ENCODE measurements at regions of chr2 and their contacts with region 1.

Region 1: GRCh38 chr2:206004004-206004693 is 81.8 kb downstream of the INO80D start:
- DNase-seq: peak; percentile 6
- ATAC-seq: peak; percentile 91
- H3K4me3 ChIP-seq: no peak overlapping the region
- H3K27ac ChIP-seq: no peak overlapping the region
- H3K4me1 ChIP-seq: no peaks in the 10 kb centered on the region
- H3K27me3 ChIP-seq: no peaks in the 10 kb centered on the region
- CTCF ChIP-seq: peak in 2 of 3 experiments; percentile 58 to 59; a peak in 4 of 6 replicates
- POLR2A ChIP-seq: no peak
- RAD21 ChIP-seq: peak; percentile 62

Region 2: DNA sequence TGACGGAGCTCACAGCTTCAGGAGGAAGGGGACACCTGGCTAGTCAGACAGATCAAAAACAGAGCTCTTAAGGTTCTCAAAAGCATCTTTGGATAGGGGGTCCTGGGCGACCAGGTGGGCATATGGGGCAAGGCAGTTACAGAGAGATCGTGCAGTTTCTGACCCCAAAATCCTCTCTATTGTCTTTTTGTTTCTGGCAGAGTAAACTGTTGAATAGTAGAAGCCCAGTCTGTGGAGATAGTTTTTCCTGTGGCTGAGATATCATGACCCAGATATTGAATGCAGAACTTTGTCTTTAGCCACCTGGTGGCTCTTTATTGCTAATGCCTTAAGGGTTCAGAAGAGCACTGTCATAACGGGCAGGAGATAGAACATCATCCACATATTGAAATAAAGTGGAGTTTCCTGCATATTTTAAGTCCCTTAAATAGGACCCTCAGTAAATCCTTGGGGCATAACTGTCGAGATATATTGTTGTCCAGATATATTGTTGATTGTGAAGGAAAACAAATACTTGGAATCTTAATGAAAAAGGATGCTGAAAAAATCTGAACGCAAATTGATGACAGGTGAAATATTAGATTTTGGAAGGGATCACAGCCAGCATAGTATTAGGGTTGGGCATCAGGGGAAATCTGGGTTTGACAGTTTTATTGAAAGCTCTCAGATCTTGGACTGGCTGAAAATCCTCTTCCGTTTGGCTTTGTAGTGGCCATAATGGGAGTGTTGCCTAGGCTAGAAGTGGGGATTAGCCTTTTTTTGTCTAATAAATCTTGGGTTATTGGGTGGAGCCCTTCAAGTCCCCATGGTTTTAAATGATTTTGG is 256.3 kb after region 1 on chr2:
- CTCF ChIA-PET with region 1: interaction called, 6 read pairs
- POLR2A ChIA-PET with region 1: no interaction called
- RAD21 ChIA-PET with region 1: no interaction called
- intact Hi-C with region 1: loop called (anchors 10 kb)
- DNase-seq: no peak
- ATAC-seq: peak; percentile 89
- H3K4me3 ChIP-seq: no peak overlapping the region
- H3K27ac ChIP-seq: no peak overlapping the region
- H3K4me1 ChIP-seq: no peaks in the 10 kb centered on the region
- H3K27me3 ChIP-seq: peaks cover 9% of the 10 kb centered on the region
- CTCF ChIP-seq: peak; percentile 28 to 60 (median 57); a peak in 5 of 6 replicates
- POLR2A ChIP-seq: no peak
- RAD21 ChIP-seq: peak; percentile 41; the same call in 1 of the 2 replicates

Measured in HCT116 (cell line).